ENCODE measurements at regions of chr2 and their contacts with region 1.

Region 1: DNA sequence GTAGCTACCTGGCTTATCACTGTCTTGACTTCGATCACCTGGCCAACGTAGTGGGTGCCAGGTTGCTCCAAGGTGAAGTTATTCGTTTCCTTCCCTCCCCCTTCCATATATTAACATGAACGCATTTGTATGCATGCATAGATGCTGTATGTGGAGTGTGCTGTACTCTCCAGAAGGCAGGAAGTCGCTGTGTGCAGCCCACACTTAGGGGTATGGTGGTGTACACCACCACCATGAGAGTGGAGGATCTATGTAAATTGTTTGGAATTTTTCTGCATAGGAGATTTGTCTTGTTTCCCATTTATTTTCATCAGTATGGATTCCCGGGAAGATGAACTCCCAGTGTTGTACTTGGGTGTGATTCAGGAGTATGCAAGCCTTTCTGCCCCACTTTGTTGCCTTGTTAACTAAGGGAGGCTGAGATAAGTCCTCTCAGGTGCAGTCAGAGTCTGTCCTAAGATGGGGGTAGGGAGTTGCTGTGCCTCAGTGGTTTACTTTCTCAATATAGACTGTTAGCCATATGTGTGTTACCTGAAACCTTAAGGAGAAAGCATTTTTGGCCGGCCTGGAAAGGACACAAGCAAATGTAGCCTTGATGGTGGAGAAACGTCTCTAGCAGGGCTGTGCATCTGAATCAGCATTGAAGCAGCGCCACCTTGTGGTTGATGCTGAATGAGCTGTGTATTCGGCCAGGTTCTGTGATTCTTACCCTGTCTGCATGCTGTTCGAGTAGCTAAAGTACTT is 149.8 kb downstream of the TANC1 start:
- DNase-seq: no peak
- H3K4me3 ChIP-seq: no peak overlapping the region
- CTCF ChIP-seq: peak; percentile 83

Region 2: DNA sequence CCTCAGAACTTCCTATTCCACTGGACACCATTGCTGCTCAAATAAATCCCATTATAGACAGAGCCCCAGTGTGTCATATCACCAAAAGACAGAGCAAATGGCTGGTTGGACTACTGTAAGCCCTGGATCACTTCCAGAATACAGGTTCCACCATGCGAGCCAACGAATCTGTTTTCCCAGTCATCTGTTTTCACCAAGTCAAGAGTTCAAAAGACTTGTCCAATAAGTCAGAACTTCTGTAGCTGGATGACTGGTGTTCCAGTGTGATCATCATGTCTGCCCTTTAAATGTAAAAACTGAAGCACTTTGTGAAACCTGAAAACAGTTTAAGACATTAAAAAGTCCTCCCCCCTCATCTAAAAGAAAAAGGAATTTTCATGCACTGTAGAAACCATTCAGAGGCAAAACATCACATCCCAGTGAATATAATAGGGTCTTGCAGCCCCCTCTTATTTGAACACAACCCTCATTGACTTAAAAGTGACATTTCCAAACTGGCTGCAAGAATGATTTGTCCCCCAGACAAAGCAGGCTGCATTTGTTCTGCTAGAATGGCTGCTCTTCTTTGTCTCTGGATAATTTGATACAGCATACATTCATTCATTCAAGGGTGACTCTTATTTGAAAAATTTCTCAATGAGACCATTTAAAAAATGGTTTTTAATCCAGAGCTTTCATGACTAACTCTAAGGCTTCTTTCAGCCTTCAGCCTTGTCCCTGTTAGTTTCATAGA is 214.4 kb before region 1 on chr2:
- CTCF ChIA-PET with region 1: interaction called, 115 read pairs
- POLR2A ChIA-PET with region 1: no interaction called
- DNase-seq: no peak
- H3K4me3 ChIP-seq: no peak overlapping the region
- CTCF ChIP-seq: no peak

Region 3: DNA sequence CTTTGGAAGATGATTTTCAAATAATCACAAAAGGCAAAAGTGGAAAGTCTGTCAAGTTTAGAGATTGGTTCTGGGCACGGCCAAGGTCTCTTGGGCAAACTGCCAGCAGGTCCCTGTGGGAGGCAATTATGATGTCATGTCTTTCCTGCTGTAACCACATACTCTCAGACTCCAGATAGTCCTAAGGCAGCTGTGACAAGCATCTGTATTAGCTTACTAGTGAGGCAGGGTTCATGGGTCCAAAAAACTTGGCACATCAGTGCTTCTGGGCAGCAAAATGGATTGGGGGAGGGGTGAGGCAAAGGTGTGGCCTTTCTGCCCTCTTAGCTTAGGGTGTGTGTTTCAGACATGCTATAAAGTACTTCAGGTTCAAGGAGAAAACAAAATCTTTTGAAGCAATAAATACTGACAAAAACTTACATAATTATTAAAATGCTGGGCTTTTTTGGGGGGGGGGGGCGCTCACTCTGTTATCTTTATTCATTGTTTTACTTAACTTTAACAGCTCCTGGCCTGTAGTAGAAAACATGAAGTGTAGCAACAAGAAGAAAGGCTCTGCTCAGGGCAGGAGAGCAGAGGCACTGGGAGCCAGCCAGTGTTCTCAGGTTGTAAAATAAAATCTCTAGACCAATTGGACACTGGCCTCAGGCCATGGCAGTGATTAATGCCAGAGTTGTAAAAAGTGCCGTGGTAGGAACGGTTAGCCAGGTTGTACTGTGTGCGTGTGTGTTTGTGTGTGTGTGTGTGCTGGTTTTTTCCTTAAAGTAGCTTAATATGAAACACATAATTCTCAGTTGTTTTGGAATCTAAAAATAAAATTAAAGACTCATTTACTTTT is 164.1 kb before region 1 on chr2:
- CTCF ChIA-PET with region 1: interaction called, 11 read pairs
- POLR2A ChIA-PET with region 1: interaction called, 3 read pairs
- DNase-seq: no peak
- H3K4me3 ChIP-seq: no peak overlapping the region
- CTCF ChIP-seq: no peak

Region 4: DNA sequence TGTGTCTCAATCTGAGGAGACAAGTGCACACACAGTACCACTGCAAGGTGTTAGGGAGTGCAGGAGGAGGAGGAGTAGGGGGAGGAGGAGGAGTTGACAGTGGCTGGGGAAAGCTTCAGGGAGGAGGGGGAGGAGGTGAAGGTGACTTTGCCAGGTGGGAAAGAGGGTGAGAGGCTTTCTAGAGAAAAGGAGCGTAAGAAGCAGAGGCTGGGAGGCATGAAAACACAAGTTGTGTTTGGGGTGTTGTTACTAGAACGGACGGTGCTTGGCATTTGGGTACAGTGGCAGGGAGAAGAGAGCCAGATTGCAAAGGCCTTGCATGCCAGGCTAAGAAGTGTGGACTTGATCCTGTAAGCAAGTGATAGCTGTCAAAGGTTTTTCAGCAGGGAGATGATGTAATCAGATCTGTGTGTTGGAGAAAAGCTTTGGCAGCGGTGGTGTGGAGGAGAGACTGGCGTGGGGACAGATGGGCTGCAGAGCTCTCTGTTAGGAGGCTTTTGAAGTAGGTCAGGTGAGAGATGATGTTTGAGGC is 133.6 kb before region 1 on chr2:
- CTCF ChIA-PET with region 1: interaction called, 14 read pairs
- POLR2A ChIA-PET with region 1: no interaction called
- DNase-seq: no peak
- H3K4me3 ChIP-seq: no peak overlapping the region
- CTCF ChIP-seq: no peak

Region 5: DNA sequence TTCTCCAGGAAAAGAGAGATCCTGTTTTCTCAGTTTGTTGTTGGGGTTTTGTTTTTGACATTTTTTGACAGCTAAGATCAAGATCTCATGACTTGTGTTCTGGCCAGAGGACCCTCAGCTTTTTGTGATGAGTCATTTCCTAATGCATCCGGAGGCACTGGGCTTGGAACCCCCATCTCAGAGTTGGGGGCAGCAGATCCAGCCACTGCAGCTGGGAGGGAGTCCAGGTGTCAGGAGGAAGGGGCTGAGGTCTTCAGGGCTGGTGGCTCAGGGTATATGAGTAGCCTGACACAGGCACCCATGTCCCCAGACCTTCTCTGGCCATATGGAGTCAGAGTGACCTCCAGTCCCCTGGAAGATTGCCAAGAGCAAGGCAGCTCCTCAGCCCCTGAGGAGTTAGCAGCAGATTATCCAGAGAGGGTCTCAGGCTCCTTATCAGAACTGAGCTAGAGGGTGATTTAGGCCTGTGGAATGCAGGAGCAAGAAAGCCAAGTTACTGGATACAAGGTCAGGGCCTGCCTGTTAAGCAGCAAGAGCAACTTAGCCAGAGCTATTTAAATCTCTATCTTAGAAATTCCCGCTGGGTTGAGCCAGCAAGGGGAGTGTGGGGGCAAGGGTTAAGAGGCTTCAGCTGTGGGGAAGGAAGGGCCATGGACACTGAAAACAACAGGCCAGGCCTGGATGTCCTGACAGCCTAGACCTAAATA is 87.5 kb before region 1 on chr2:
- CTCF ChIA-PET with region 1: interaction called, 18 read pairs
- POLR2A ChIA-PET with region 1: no interaction called
- DNase-seq: no peak
- H3K4me3 ChIP-seq: no peak overlapping the region
- CTCF ChIP-seq: no peak

Region 6: DNA sequence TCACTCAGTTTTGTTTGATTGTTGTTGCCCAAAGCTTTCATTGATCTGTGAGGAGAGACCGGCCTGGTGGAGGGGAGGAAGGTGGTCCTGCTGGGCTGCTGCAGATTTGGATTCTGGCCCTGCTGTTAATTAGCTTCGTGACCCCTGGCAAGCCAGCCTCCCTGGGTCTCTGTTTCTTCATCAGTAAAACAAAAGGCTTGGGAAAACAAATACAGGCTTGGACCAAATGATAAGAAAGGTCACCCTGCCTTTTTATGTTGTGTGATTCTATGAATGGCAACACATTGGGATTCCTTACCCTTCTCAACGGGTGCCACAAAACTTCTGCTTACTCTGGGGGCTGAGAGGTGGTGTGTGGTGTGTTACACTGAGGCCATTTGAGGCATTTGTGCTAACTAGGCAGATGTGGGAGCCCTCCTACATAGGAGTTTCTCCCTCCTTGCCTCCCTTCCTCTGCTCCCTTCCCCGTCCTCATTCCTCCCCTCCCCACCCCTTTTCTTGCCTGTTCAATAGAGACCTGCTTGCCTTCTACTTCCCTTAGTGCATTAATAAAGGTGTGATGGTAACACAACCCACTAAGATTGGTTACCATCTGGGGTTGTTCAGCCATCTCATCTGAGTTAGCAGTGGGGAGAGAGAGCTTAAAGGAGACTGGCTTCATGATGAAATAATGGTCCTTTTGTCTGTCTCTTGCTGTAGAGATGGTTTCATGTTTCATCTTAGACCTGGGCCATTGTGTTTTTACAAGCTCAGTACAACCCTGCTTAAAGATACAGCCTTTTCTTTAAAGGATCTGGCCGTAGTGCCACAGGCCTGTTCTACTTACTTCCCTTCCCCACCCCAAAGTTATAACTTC is 53.6 kb before region 1 on chr2:
- CTCF ChIA-PET with region 1: interaction called, 11 read pairs
- POLR2A ChIA-PET with region 1: no interaction called
- DNase-seq: no peak
- H3K4me3 ChIP-seq: no peak overlapping the region
- CTCF ChIP-seq: no peak

Region 7: DNA sequence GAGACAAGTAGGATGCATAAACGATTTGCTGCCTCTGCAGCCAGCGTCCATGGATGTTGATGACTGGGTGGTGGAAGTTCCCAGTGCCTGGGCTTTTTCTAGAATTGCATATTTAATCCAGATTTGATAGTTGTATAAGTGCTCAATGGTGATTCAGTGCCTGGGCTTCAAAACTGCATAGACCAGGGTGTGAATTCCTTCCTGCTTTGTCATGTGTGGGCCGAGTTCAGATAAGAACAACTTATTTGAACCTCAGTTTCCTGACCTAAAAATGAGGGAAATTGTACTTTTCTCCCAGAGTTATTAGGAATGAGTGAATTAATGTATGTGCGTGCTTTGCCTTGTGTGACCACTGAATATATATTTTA is 13.6 kb after region 1 on chr2:
- CTCF ChIA-PET with region 1: interaction called, 61 read pairs
- POLR2A ChIA-PET with region 1: no interaction called
- DNase-seq: no peak
- H3K4me3 ChIP-seq: no peak overlapping the region
- CTCF ChIP-seq: no peak

Region 8: GRCh38 chr2:159516241-159516766 is 398.0 kb after region 1 on chr2:
- CTCF ChIA-PET with region 1: no interaction called
- POLR2A ChIA-PET with region 1: no interaction called
- DNase-seq: no peak
- H3K4me3 ChIP-seq: peak overlapping the region; percentile 43
- CTCF ChIP-seq: no peak